Activated CD4-positive, alpha-beta T cell treated with anti-CD3 and anti-CD28 coated beads for 36 hours (primary cell): ENCODE measurements at regions of chr14 and their contacts with region 1.

Region 1: GRCh38 chr14:71320107-71320733 is 413.0 kb downstream of the PCNX1 start:
- DNase-seq: peak; percentile 99
- ATAC-seq: peak; percentile 87
- H3K4me3 Mint-ChIP-seq: peak within 1 kb of the TSS; percentile 92
- H3K27ac Mint-ChIP-seq: peak within 1 kb of the TSS; percentile 89
- H3K4me1 Mint-ChIP-seq: peaks cover 39% of the 10 kb centered on the region
- H3K27me3 Mint-ChIP-seq: no peaks in the 10 kb centered on the region

Region 2: GRCh38 chr14:69611201-69612011 is 1708.8 kb before region 1 on chr14 and contains the start of gene SUSD6:
- CTCF ChIA-PET with region 1: no interaction called
- POLR2A ChIA-PET with region 1: no interaction called
- intact Hi-C with region 1: loop called in 1 of 2 experiments (anchors 5 kb)
- DNase-seq: peak; percentile 95
- ATAC-seq: peak; percentile 74
- H3K4me3 Mint-ChIP-seq: peak within 1 kb of the TSS; percentile 87
- H3K27ac Mint-ChIP-seq: peak within 1 kb of the TSS; percentile 99
- H3K4me1 Mint-ChIP-seq: peaks cover 48% of the 10 kb centered on the region
- H3K27me3 Mint-ChIP-seq: no peaks in the 10 kb centered on the region
- total RNA-seq, gene SUSD6: 57.9 to 59.3 TPM

Region 3: GRCh38 chr14:70809543-70810244 is 510.5 kb before region 1 on chr14:
- CTCF ChIA-PET with region 1: no interaction called
- POLR2A ChIA-PET with region 1: no interaction called
- intact Hi-C with region 1: loop called in 1 of 2 experiments (anchors 1 kb)
- DNase-seq: peak; percentile 96
- ATAC-seq: peak; percentile 87
- H3K4me3 Mint-ChIP-seq: no peak overlapping the region
- H3K27ac Mint-ChIP-seq: peak overlapping the region; percentile 20
- H3K4me1 Mint-ChIP-seq: peaks cover 4% of the 10 kb centered on the region
- H3K27me3 Mint-ChIP-seq: no peaks in the 10 kb centered on the region

Region 4: DNA sequence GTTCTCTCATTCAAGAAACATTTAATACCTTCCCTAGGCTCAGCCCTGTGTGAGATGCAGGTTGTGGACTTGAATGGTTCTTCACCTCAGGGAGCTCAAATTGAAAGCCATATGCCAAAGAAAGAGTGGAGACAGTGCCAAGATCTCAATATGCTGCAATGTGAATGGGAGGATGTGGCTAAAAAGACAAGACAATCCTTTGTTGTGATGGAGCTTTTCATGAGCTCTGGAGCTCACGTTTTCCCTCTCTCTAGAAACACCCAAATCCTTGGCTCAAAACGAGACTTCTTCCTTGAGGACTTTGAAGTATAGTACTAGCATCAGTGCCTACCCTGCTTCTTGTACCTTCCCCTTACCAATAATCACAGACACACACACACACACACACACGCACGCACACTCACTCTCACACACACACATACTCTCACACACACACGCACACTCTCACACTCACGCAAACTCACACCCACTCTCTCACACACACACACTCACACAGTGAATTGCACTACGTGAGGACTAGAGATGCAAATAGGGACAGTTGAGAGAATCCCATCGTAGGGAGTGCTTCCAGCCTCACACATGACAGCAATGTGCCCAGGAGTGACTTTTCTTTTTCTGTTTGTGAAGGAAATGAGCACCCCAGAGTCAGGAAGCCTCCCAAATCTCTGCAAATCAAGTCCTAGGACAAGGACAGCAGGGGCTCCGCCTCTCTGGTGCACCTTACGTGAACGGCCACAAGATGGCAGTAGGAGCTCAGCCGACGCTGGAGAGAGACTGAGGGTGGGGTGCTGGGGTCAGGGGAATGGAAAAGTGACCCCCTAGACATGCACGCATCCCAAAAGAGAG is 181.5 kb before region 1 on chr14:
- CTCF ChIA-PET with region 1: interaction called, 4 read pairs
- POLR2A ChIA-PET with region 1: interaction called, 4 read pairs
- intact Hi-C with region 1: loop called (anchors 1 to 2 kb)
- DNase-seq: peak; percentile 73
- ATAC-seq: peak; percentile 17
- H3K4me3 Mint-ChIP-seq: no peak overlapping the region
- H3K27ac Mint-ChIP-seq: no peak overlapping the region
- H3K4me1 Mint-ChIP-seq: peaks cover 28% of the 10 kb centered on the region
- H3K27me3 Mint-ChIP-seq: peaks cover 3% of the 10 kb centered on the region

Region 5: DNA sequence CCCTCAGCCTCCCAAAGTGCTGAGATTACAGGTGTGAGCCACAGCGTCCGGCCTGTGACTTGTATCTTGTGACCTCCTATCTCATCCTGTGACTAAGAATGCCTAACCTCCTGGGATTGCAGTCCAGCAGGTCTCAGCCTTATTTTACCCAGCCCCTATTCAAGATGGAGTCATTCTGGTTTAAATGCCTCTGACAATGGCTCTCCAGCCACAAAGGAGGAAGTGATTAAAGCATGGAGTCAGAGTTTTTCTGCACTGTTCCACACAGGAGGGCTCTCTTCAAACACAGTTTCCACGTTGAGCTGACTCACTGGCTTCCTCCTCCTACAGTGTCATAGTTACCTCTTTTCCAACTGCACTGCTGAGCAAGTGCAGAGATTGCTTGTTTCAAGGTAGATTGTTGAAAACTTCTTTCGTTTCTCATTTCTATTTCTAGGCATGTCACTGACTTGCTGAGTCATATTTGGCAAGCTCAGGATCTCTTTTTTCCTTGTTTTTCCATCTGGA is 29.2 kb before region 1 on chr14:
- CTCF ChIA-PET with region 1: interaction called, 3 read pairs
- POLR2A ChIA-PET with region 1: interaction called, 3 read pairs
- intact Hi-C with region 1: loop called in 1 of 2 experiments (anchors 1 kb)
- DNase-seq: peak; percentile 72
- ATAC-seq: peak; percentile 100
- H3K4me3 Mint-ChIP-seq: no peak overlapping the region
- H3K27ac Mint-ChIP-seq: peak overlapping the region; percentile 45
- H3K4me1 Mint-ChIP-seq: peaks cover 18% of the 10 kb centered on the region
- H3K27me3 Mint-ChIP-seq: peaks cover 2% of the 10 kb centered on the region

Region 6: DNA sequence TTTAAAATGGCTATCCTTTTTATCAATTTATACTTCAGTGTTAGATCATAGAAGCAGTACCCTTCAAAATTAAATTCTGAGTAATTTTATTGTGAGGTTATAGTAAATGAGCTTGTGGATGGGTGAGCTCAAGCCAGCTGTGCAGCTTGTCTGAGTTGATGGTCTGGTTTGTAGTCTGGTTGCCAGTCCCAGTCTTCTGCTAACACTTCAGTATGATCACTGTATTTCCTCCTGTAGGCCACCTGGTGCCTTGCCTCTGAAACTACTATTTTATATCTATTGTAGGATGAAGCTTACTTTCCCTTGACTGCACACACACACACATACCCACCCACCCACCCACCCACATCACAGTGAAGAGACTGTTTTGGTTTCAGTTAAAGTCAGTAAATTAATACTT is 83.4 kb after region 1 on chr14:
- CTCF ChIA-PET with region 1: interaction called, 3 read pairs
- POLR2A ChIA-PET with region 1: interaction called, 9 read pairs
- intact Hi-C with region 1: loop called (anchors 1 to 2 kb)
- DNase-seq: peak; percentile 43
- ATAC-seq: peak; percentile 78
- H3K4me3 Mint-ChIP-seq: no peak overlapping the region
- H3K27ac Mint-ChIP-seq: no peak overlapping the region
- H3K4me1 Mint-ChIP-seq: peaks cover 34% of the 10 kb centered on the region
- H3K27me3 Mint-ChIP-seq: no peaks in the 10 kb centered on the region

Region 7: DNA sequence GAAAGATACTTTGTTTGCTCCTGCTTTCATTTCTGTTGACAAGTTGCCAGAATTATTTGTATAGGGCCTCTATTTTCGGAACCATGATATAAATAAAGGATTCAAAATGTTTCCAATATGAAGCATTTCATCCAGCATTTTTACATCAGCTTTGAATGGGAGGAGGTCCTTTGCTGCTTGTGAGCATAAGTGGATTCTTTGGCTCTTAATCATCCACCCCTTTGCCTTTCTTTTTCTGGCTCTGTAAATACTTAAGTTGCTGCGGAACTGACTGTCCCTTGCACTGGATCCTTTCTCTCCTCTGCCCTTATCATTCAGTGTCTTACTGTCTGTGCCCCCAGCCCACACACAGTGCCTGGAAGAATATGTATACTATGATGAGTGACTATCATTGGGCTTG is 254.8 kb after region 1 on chr14:
- CTCF ChIA-PET with region 1: no interaction called
- POLR2A ChIA-PET with region 1: no interaction called
- intact Hi-C with region 1: no loop called
- DNase-seq: no peak
- ATAC-seq: no peak
- H3K4me3 Mint-ChIP-seq: no peak overlapping the region
- H3K27ac Mint-ChIP-seq: no peak overlapping the region
- H3K4me1 Mint-ChIP-seq: peaks cover 21% of the 10 kb centered on the region
- H3K27me3 Mint-ChIP-seq: no peaks in the 10 kb centered on the region

Region 8: GRCh38 chr14:71753126-71753830 is 433.1 kb after region 1 on chr14:
- CTCF ChIA-PET with region 1: no interaction called
- POLR2A ChIA-PET with region 1: no interaction called
- intact Hi-C with region 1: loop called (anchors 2 kb)
- DNase-seq: peak; percentile 84
- ATAC-seq: peak; percentile 51
- H3K4me3 Mint-ChIP-seq: no peak overlapping the region
- H3K27ac Mint-ChIP-seq: no peak overlapping the region
- H3K4me1 Mint-ChIP-seq: peaks cover 3% of the 10 kb centered on the region
- H3K27me3 Mint-ChIP-seq: no peaks in the 10 kb centered on the region